Left cardiac atrium (tissue), 4 donors: ENCODE measurements at regions of chr12 and their contacts with region 1.

Region 1: DNA sequence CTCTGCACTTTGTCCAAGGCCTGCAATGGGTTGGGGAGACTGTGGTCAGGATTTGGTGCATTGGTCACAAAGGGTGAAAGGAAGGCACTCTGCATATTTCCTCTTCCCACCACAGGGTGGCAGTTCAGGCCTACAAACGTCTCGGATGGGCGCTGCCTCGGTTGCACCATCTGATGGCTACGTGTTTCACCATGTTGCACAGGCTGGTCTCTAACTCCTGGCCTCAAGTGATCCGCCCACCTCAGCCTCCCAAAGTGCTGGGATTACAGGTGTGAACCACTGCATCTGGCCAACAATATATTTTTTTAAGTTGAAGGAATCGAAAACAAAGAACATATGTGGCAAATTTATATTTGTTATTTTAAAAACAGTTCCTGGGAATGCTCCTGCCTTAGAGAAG is 35.1 kb downstream of the TMBIM6 start:
- DNase-seq: peak; percentile 81
- ATAC-seq: peak; percentile 93 to 96

Region 2: GRCh38 chr12:49838973-49839633 is 62.7 kb after region 1 on chr12:
- intact Hi-C with region 1: loop called (anchors 1 to 5 kb)
- DNase-seq: no peak
- ATAC-seq: no peak

Region 3: GRCh38 chr12:50222275-50222795 is 445.9 kb after region 1 on chr12:
- intact Hi-C with region 1: no loop called
- DNase-seq: peak; percentile 49
- ATAC-seq: peak; percentile 90 to 93

Region 4: GRCh38 chr12:50661300-50662115 is 885.1 kb after region 1 on chr12:
- intact Hi-C with region 1: no loop called
- DNase-seq: no peak
- ATAC-seq: no peak